Mammary epithelial cell (primary cell): ENCODE measurements at regions of chr19 and their contacts with region 1.

Region 1: GRCh38 chr19:43784981-43785808 is 4.4 kb upstream of the KCNN4 start:
- DNase-seq: peak; percentile 67
- H3K4me3 ChIP-seq: no peak overlapping the region
- H3K27ac ChIP-seq: peak overlapping the region; percentile 88
- H3K4me1 ChIP-seq: peaks cover 51% of the 10 kb centered on the region
- H3K27me3 ChIP-seq: no peaks in the 10 kb centered on the region
- CTCF ChIP-seq: peak; percentile 99 to 100

Region 2: DNA sequence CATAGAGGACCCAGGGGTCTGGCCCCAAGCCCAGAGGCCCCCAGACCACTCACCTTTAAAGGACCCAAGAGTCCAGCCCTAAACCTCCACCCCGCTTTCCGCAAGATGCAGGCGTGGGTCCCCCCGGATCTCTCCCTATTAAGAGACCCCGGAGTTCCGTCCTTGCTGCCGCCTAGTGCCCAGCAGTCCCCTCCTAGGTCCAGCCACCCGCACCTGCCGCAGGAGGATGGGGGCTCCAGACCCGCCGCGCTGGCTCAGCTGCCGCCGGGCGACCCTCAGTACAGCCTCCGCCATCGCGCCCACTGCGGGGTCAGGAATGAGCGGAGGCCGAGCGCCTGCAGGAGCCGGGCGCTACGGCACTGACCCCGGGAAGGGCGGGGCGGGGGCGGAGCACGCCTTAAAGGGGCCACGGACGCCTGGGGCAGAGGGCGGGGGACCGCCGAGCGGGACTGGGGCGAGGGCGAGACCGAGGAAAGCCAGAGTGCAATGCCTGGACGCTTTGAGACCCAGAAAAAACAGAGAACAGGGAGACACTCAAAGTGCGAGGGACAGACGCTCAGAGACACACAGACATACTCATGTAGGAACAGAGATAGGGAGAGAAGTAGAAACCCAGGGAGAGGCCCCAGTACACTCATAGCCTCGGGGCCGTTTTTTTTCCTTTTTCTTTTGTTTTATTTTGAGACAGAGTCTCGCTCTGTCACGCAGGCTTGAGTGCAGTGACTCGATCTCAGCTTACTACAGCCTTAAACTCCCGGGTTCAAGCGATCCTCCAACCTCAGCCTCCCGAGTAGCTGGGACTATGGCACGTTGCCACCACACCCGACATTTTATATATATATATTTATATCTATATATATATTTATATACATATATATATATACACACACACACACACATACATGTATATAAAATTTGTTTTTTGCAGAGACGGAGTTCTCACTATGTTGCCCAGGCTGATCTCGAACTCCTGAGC is 258.0 kb before region 1 on chr19 and contains the start of gene ETHE1:
- CTCF ChIA-PET with region 1: no interaction called
- dilution Hi-C with region 1: no loop called
- in situ Hi-C with region 1: no loop called
- intact Hi-C with region 1: loop called (anchors 10 kb)
- DNase-seq: peak; percentile 78
- H3K4me3 ChIP-seq: peak within 1 kb of the TSS; percentile 75 to 90 (median 90)
- H3K27ac ChIP-seq: peak within 1 kb of the TSS; percentile 71
- H3K4me1 ChIP-seq: peaks cover 37% of the 10 kb centered on the region
- H3K27me3 ChIP-seq: no peaks in the 10 kb centered on the region
- CTCF ChIP-seq: no peak
- total RNA-seq, gene ETHE1: 114 to 122 TPM

Region 3: DNA sequence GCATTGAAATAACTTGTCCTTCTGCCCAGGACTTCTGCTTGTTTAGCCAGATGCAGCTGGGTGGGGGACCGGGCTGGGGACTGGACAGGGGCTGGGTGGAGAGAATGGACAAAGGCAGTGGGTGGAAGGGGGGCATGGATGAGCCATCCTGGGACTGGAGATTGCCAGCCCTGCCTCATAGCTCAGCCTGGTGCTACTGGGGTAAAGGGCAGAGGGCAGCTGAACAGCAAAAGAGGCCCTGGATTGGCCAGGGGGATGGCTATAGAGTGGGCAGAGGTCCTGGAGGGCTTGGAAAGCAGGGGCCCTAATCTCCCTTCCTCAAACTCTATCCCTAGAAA is 97.6 kb before region 1 on chr19:
- CTCF ChIA-PET with region 1: no interaction called
- dilution Hi-C with region 1: no loop called
- in situ Hi-C with region 1: no loop called
- intact Hi-C with region 1: no loop called
- DNase-seq: no peak
- H3K4me3 ChIP-seq: no peak overlapping the region
- H3K27ac ChIP-seq: no peak overlapping the region
- H3K4me1 ChIP-seq: peaks cover 16% of the 10 kb centered on the region
- H3K27me3 ChIP-seq: no peaks in the 10 kb centered on the region
- CTCF ChIP-seq: no peak

Region 4: GRCh38 chr19:43743022-43743421 is 42.2 kb before region 1 on chr19:
- CTCF ChIA-PET with region 1: interaction called, 9 read pairs
- dilution Hi-C with region 1: loop called (anchors 5 kb)
- in situ Hi-C with region 1: loop called (anchors 5 kb)
- intact Hi-C with region 1: loop called (anchors 1 kb)
- DNase-seq: no peak
- H3K4me3 ChIP-seq: no peak overlapping the region
- H3K27ac ChIP-seq: no peak overlapping the region
- H3K4me1 ChIP-seq: peaks cover 17% of the 10 kb centered on the region
- H3K27me3 ChIP-seq: no peaks in the 10 kb centered on the region
- CTCF ChIP-seq: no peak

Region 5: DNA sequence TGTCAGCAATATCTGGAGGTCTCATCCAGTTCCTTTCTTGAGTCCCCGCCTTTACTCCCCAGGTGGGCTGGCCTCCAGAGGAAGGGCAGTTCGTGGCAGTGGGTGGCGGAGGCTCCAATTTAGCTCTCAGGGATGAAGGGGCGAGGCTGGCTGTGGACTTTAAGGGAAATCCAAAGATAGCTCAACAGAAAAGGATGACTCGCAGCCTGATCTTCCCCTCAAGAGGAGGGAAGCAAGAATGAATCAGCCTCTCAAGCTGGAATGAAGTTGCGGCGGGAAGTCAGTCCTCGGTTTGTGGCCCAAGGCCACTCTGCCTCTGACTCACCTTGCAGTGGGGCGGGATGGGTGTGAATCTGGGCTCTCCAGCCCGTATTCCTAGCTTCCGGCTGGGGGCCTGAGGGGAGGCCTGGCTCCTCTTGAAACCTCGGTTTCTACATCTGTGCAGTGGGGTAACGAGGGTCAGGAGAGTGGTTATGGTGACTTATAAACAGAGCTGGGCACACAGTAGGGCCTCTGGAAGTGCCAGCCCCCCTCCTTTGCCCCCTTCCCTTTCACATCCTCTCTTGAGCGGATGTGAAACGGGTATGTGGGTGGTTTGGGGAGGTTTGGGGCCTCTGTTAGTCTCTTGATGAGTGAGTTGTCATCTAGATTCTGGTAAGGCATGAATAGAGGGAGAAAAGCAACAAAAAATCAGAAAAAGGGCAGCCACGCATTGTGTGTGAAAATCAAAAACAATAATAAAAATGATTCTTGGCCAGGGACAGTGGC is 19.9 kb before region 1 on chr19:
- CTCF ChIA-PET with region 1: no interaction called
- dilution Hi-C with region 1: no loop called
- in situ Hi-C with region 1: no loop called
- intact Hi-C with region 1: loop called (anchors 1 kb)
- DNase-seq: peak; percentile 98
- H3K4me3 ChIP-seq: no peak overlapping the region
- H3K27ac ChIP-seq: peak overlapping the region; percentile 82
- H3K4me1 ChIP-seq: peaks cover 74% of the 10 kb centered on the region
- H3K27me3 ChIP-seq: no peaks in the 10 kb centered on the region
- CTCF ChIP-seq: no peak

Region 6: GRCh38 chr19:43950834-43951645 is 165.8 kb after region 1 on chr19 and contains the start of gene ZNF221:
- CTCF ChIA-PET with region 1: no interaction called
- dilution Hi-C with region 1: no loop called
- in situ Hi-C with region 1: no loop called
- intact Hi-C with region 1: loop called (anchors 2 kb)
- DNase-seq: peak; percentile 96
- H3K4me3 ChIP-seq: peak within 1 kb of the TSS; percentile 79 to 85 (median 84)
- H3K27ac ChIP-seq: peak within 1 kb of the TSS; percentile 5
- H3K4me1 ChIP-seq: no peaks in the 10 kb centered on the region
- H3K27me3 ChIP-seq: no peaks in the 10 kb centered on the region
- CTCF ChIP-seq: peak in 1 of 2 donors; percentile 44
- total RNA-seq, gene ZNF221: 4.1 to 9.3 TPM